Activated B cell treated with CpG ODN at 0.5 μM for 24 hours (primary cell): ENCODE measurements at regions of chr3 and their contacts with region 1.

Region 1: GRCh38 chr3:158748237-158748828 is 16.1 kb upstream of the RARRES1 start:
- DNase-seq: no peak
- ATAC-seq: no peak
- H3K4me3 Mint-ChIP-seq: no peak overlapping the region
- H3K27ac Mint-ChIP-seq: no peak overlapping the region
- H3K4me1 Mint-ChIP-seq: peaks cover 13% of the 10 kb centered on the region
- H3K27me3 Mint-ChIP-seq: no peaks in the 10 kb centered on the region
- CTCF ChIP-seq: no peak

Region 2: DNA sequence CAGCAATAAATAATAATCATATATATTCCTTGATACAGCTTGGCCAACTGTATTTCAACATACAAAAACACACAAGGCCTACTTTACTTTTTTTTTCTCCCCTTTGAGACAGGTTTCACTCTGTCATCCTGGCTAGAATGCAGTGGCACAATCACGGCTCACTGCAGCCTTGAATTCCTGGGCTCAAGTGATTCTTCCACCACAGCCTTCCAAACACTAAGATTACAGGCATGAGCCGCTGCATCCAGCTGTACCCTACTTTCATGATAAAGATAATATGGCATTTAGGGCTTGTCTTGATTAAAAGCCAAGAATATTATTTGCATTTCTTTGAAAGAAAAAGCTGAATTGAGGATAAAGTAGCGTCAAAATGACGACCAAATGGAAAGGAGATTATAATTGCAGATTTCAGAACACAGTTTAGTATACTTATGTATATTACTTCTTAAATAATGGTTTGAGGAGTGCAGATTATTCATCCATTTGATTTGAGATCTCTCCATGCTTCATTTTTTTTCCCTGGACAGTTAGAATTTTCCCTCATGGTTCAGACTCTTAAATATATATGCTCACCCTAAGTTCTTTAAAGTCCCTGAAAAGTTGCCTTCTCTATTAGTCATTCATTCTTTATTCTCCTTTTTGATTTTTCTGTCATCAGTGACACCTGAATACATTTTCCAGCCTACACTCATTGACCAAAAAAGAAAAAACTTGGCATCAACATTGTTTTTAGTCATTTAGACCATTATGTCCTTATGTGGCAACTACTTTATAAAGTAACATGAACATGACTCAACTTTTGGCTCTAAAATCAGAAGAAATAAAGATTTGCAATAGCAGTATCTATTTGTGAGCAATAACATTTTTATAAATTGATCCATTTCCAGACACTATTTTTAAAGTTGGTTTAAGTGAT is 225.9 kb before region 1 on chr3:
- CTCF ChIA-PET with region 1: no interaction called
- POLR2A ChIA-PET with region 1: no interaction called
- intact Hi-C with region 1: no loop called
- DNase-seq: no peak
- ATAC-seq: no peak
- H3K4me3 Mint-ChIP-seq: no peak overlapping the region
- H3K27ac Mint-ChIP-seq: no peak overlapping the region
- H3K4me1 Mint-ChIP-seq: no peaks in the 10 kb centered on the region
- H3K27me3 Mint-ChIP-seq: no peaks in the 10 kb centered on the region
- CTCF ChIP-seq: no peak

Region 3: DNA sequence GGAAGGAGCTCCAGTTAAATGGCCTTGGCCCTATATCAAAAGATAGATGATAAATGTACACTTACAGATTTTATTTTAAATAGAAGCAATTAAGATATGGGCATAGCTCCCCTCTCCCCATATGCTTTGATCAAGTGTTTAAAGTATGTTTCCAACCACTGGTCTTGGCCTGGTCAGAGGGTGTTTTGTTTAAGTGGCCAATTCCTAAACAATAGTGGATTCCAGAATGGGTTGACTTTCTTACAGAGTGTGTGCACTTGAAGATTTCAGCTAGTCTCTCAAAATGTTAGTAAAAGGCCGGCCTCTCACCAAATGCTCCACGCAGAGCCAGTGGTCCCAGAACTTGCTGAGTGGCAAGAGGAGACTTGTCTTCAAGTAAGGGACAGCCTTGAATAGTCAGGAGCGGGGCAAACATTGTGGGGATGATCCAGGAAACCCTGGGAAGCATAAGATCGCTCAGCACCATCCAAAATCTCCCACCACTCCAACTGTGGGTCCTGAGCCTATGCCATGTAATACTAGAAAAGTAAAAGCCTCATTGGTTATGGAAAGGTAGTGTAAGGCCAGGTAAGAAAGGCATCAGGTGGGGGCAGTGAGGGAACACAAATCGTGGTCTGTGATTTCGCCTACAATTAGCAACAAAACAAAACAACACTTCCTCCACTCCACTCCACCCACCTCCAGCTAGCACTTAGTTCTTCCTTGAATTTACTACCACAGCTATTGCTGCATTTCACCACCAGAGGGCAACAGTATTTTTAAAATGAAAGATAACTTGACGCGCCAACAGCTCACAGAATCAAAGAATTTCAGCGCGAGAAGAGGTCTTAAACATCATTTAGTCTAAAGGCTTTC is 20.9 kb before region 1 on chr3:
- CTCF ChIA-PET with region 1: interaction called, 7 read pairs
- POLR2A ChIA-PET with region 1: no interaction called
- intact Hi-C with region 1: loop called (anchors 1 kb)
- DNase-seq: no peak
- ATAC-seq: peak; percentile 62
- H3K4me3 Mint-ChIP-seq: no peak overlapping the region
- H3K27ac Mint-ChIP-seq: no peak overlapping the region
- H3K4me1 Mint-ChIP-seq: peaks cover 28% of the 10 kb centered on the region
- H3K27me3 Mint-ChIP-seq: no peaks in the 10 kb centered on the region
- CTCF ChIP-seq: peak; percentile 17